ENCODE measurements at regions of chr6 and their contacts with region 1.

Region 1: DNA sequence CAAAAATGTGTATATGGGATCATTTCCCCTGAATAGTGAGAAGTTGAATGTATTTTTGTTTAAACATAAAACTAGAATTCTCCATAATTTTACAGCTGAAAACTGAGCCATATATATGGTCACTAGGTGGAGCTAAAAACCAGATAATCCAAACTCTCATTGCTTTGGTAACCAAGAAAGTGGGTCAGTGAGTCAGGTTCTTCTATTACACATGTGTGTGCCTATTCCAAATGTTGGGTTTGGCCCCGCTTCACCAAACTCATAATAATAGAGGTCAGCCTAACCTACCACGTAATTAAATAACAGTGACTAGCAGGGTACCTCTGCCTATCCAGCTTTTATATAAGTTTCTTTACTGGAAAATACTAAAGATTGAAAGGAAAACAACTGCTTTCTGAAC is 19.3 kb upstream of the RNGTT start:
- DNase-seq: peak; percentile 78
- H3K4me3 ChIP-seq: no peak overlapping the region
- H3K27ac ChIP-seq: no peak overlapping the region
- H3K4me1 ChIP-seq: no peaks in the 10 kb centered on the region
- H3K27me3 ChIP-seq: peaks cover 2% of the 10 kb centered on the region
- CTCF ChIP-seq: peak; percentile 66 to 71

Region 2: DNA sequence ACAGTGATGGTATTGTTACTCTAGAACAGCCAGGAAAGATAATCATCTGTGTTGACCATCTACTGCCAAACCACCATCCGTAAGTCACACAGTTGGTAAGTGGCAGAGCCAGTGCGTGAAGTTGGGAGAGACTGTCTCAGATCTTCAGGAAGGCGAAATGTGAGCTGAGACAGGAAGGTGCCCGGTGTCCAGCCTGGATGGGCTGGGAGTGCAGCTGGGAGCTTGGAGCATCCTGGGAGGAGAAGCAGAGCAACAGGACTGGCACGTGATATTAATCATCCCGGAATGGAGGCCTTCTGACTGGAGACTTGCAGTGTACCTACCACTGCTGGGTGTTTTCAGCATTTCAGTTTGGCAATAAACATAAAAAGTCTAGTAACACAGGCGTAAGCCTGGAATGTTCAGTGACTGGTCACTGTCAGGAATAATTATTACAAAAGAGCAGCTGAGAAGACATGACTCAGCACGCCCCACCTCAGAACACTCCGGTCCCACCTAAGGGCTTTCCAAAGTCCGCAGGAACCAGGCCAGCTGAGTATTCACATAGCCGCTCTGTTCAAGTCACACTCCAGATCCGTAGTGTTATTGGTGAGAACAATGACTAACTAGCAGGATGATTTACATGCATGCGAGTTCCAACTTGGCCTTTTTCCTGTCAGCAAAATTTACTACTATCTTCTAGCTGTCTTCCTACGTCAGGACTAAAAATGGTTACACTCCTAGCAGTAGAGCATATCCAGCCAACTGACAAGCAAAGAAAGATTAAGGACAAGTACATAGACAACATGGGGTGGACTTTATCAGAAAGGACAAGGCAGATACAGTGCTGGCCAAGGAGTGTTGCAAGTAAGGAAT is 52.8 kb after region 1 on chr6:
- CTCF ChIA-PET with region 1: no interaction called
- dilution Hi-C with region 1: no loop called
- in situ Hi-C with region 1: no loop called
- intact Hi-C with region 1: loop called (anchors 1 kb)
- DNase-seq: peak; percentile 100
- H3K4me3 ChIP-seq: peak overlapping the region; percentile 8 to 47 (median 37)
- H3K27ac ChIP-seq: peak overlapping the region; percentile 98
- H3K4me1 ChIP-seq: peaks cover 27% of the 10 kb centered on the region
- H3K27me3 ChIP-seq: no peaks in the 10 kb centered on the region
- CTCF ChIP-seq: no peak

Region 3: DNA sequence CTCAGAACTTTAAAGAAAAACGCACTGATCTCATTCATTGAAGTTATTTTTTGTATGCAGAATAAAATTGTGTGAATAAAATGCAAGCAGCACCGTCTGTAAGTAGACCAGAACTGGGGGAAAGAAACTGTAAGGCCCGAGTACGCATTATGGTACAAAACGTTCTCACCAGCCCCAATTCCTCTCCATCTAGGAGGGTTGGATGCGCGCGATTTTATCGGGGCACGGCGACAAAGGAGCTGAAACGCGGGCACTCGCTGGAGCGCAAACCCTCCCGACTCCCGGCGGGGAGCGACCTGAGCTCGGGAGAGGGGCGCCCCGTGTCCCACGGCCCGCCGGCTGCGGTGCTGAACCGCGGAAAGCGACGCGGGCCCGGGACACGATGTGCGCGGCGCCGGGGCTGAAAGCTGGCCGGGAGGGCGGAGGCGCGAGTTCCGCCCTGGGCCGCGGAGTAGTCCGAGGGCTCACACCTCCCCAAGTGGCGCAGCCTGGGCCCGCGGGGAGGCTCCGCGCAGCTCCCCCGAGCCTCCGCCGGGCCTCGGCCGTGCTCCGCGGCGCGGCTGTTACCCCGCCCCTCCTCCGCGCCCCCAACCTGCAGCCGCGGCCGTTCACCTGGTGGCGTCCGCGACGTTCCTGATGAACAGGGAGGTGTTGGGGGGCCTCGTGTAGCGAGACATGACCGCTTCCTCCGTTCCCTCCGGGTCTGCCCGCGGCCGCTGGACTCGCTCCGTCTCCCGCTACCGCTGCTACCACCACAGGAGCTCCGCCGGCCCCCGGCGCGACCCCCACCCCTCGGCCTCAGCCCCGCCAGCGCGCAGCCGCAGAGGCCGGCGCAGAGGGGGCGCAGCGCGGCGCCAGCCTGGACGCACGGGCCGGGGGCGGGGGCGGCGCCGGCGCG is 134.7 kb after region 1 on chr6 and contains the start of gene SRSF12:
- CTCF ChIA-PET with region 1: no interaction called
- dilution Hi-C with region 1: no loop called
- in situ Hi-C with region 1: no loop called
- intact Hi-C with region 1: loop called (anchors 1 kb)
- DNase-seq: peak; percentile 51
- H3K4me3 ChIP-seq: peak within 1 kb of the TSS; percentile 59 to 62 (median 61)
- H3K27ac ChIP-seq: no peak within 1 kb of the TSS
- H3K4me1 ChIP-seq: peaks cover 12% of the 10 kb centered on the region
- H3K27me3 ChIP-seq: peaks cover 5% of the 10 kb centered on the region
- CTCF ChIP-seq: no peak
- total RNA-seq, gene SRSF12: 0.54 to 3.8 TPM

Region 4: DNA sequence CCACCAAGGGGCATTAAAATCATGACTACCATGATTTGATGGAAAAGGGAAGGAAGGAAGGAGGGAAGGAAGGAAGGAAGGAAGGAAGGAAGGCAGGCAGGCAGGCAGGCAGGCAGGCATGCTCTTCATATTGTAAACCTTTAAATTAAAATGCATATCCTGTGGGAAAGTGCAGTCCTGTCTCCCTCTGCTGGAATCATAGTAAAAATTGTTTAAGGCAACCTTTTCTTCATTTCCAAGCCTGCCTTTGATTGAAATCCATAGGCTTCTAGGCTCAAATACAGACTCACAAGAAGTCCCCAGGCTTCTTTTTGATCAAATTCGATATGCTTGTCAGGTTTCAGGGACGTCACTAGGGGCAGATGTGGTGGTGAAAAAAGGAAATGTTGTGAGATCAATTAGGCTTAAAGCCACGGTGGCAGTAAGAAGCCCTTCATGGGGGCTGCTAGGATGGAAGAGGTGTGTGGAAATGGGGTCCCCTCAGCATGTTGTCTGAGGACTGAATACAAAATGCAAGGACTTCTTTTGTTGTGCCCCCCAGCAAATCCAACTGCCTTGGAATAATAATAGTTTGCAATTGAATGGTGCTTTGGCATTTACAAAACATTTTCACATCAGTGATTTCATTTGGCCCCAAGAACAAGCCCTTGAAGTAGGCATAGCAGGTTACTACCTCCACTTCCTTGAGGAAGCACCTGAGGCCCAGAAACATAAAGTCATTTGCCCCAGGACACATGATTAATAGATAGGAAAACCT is 260.0 kb after region 1 on chr6:
- CTCF ChIA-PET with region 1: no interaction called
- dilution Hi-C with region 1: no loop called
- in situ Hi-C with region 1: loop called (anchors 5 kb)
- intact Hi-C with region 1: loop called (anchors 1 kb)
- DNase-seq: peak; percentile 27
- H3K4me3 ChIP-seq: no peak overlapping the region
- H3K27ac ChIP-seq: no peak overlapping the region
- H3K4me1 ChIP-seq: no peaks in the 10 kb centered on the region
- H3K27me3 ChIP-seq: peaks cover 5% of the 10 kb centered on the region
- CTCF ChIP-seq: peak; percentile 44 to 60

Region 5: GRCh38 chr6:89311853-89312531 is 329.3 kb after region 1 on chr6:
- CTCF ChIA-PET with region 1: no interaction called
- dilution Hi-C with region 1: no loop called
- in situ Hi-C with region 1: no loop called
- intact Hi-C with region 1: no loop called
- DNase-seq: no peak
- H3K4me3 ChIP-seq: no peak overlapping the region
- H3K27ac ChIP-seq: no peak overlapping the region
- H3K4me1 ChIP-seq: no peaks in the 10 kb centered on the region
- H3K27me3 ChIP-seq: peaks cover 3% of the 10 kb centered on the region
- CTCF ChIP-seq: peak; percentile 25 to 58

Region 6: GRCh38 chr6:89371849-89372505 is 389.3 kb after region 1 on chr6:
- CTCF ChIA-PET with region 1: interaction called, 6 read pairs
- dilution Hi-C with region 1: no loop called
- in situ Hi-C with region 1: loop called in 1 of 2 experiments (anchors 25 kb)
- intact Hi-C with region 1: loop called (anchors 1 kb)
- DNase-seq: peak; percentile 32
- H3K4me3 ChIP-seq: no peak overlapping the region
- H3K27ac ChIP-seq: no peak overlapping the region
- H3K4me1 ChIP-seq: no peaks in the 10 kb centered on the region
- H3K27me3 ChIP-seq: no peaks in the 10 kb centered on the region
- CTCF ChIP-seq: peak; percentile 94 to 99

Measured in mammary epithelial cell (primary cell).